ENCODE measurements at regions of chr12 and their contacts with region 1.

Region 1: GRCh38 chr12:106841510-106842302 is 67.2 kb downstream of the RIC8B start:
- DNase-seq: peak; percentile 67
- H3K4me3 Mint-ChIP-seq: no peak overlapping the region
- H3K27ac Mint-ChIP-seq: no peak overlapping the region
- H3K4me1 Mint-ChIP-seq: peaks cover 7% of the 10 kb centered on the region
- H3K27me3 Mint-ChIP-seq: no peaks in the 10 kb centered on the region

Region 2: DNA sequence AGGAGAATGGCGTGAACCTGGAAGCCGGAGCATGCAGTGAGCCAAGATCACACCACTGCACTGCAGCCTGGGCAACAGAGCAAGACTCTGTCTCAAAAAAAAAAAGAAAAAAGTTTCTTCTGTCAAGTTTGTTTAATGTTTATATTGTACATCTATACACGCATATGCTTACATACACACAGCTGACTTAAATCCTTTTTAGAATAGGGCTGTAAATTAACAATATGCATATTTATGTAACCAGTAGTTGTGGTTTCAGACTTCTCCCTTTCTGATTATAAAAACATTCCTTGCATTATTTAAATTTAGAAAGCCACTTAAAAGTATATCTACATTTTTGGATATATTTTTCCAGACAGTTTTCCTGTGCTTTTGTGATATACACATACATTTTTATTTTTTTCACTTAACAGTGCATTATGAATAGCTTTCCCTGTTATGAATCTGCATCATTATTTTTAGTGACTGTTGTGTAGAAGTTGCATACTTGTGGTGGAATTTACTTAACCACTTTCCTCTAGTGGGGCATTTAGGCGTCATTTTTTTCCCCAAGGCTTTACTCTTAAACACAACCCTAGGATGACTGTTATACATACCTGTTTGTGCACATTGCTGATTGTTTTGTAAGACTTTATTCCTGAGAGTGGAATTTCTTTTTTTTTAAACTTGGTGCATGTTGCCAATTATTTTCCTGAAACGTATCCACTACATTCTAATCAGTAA is 454.7 kb before region 1 on chr12:
- CTCF ChIA-PET with region 1: interaction called, 8 read pairs
- intact Hi-C with region 1: loop called (anchors 1 kb)
- DNase-seq: no peak
- H3K4me3 Mint-ChIP-seq: no peak overlapping the region
- H3K27ac Mint-ChIP-seq: no peak overlapping the region
- H3K4me1 Mint-ChIP-seq: no peaks in the 10 kb centered on the region
- H3K27me3 Mint-ChIP-seq: no peaks in the 10 kb centered on the region

Region 3: DNA sequence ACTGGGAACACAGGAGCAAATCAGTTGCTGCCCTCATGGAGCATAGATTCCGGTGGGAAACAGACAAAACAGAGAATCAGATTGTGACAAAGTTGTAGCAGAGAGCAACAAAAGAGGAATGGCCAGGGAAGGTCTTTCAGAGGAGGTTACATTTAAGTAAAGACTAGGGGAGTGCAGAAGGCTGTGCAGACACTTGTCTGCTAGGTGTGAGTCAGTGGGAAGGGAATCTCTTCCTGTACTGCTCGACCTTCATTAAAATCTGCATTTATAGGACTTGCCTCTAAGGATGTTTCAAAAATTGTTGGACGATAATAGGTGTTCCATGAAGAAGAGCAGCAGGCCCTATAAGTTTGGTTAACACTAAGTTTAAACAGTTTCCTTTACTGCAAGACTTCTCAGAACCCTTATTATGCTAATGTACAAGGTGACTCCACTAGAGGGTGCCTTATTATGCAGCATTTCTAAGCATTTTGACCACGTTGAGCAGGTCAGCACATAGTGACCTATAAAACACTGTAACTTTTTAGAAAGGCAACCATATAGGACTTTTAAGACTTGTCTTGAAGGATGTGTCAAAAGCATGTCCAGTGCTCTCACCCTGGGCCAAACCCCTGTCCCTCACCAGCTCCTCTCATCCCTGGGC is 159.0 kb before region 1 on chr12:
- CTCF ChIA-PET with region 1: no interaction called
- intact Hi-C with region 1: loop called (anchors 1 kb)
- DNase-seq: no peak
- H3K4me3 Mint-ChIP-seq: no peak overlapping the region
- H3K27ac Mint-ChIP-seq: no peak overlapping the region
- H3K4me1 Mint-ChIP-seq: no peaks in the 10 kb centered on the region
- H3K27me3 Mint-ChIP-seq: no peaks in the 10 kb centered on the region

Region 4: GRCh38 chr12:106722854-106723253 is 118.9 kb before region 1 on chr12:
- CTCF ChIA-PET with region 1: interaction called, 3 read pairs
- intact Hi-C with region 1: loop called (anchors 5 kb)
- DNase-seq: no peak
- H3K4me3 Mint-ChIP-seq: no peak overlapping the region
- H3K27ac Mint-ChIP-seq: no peak overlapping the region
- H3K4me1 Mint-ChIP-seq: peaks cover 2% of the 10 kb centered on the region
- H3K27me3 Mint-ChIP-seq: no peaks in the 10 kb centered on the region

Region 5: GRCh38 chr12:106736051-106736957 is 105.4 kb before region 1 on chr12:
- CTCF ChIA-PET with region 1: interaction called, 6 read pairs
- intact Hi-C with region 1: loop called (anchors 1 kb)
- DNase-seq: peak; percentile 49
- H3K4me3 Mint-ChIP-seq: no peak overlapping the region
- H3K27ac Mint-ChIP-seq: no peak overlapping the region
- H3K4me1 Mint-ChIP-seq: peaks cover 4% of the 10 kb centered on the region
- H3K27me3 Mint-ChIP-seq: no peaks in the 10 kb centered on the region

Region 6: DNA sequence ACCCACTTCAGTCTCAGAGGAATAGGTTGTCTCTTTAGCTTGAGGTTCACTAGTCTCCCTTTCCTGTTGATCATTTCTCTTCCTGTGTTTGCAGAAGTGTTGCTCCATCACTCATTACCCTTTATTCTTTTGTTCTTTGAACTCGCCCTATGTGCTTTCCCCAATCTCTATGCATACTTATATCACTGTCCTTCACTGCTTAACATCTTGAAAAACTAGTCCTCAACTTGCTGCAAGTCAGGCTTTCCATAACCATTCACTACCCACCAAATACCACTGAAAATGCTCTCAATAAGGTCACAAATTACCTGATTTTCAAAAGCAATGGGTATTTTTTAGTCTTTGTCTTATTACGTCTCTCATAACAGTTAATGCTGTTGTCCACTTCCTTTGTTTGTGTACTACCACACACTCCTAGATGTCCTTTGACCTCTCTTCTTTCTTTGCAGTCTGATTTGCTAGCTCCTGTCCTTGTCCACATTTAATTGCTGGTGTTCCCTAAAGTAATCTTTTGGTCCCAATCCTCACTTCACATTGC is 13.6 kb after region 1 on chr12:
- CTCF ChIA-PET with region 1: no interaction called
- intact Hi-C with region 1: no loop called
- DNase-seq: no peak
- H3K4me3 Mint-ChIP-seq: no peak overlapping the region
- H3K27ac Mint-ChIP-seq: no peak overlapping the region
- H3K4me1 Mint-ChIP-seq: peaks cover 4% of the 10 kb centered on the region
- H3K27me3 Mint-ChIP-seq: no peaks in the 10 kb centered on the region

Measured in activated naive CD4-positive, alpha-beta T cell treated with anti-CD3 and anti-CD28 coated beads for 36 hours (primary cell).